PC-3 (cell line): ENCODE measurements at regions of chr1 and their contacts with region 1.

Region 1: DNA sequence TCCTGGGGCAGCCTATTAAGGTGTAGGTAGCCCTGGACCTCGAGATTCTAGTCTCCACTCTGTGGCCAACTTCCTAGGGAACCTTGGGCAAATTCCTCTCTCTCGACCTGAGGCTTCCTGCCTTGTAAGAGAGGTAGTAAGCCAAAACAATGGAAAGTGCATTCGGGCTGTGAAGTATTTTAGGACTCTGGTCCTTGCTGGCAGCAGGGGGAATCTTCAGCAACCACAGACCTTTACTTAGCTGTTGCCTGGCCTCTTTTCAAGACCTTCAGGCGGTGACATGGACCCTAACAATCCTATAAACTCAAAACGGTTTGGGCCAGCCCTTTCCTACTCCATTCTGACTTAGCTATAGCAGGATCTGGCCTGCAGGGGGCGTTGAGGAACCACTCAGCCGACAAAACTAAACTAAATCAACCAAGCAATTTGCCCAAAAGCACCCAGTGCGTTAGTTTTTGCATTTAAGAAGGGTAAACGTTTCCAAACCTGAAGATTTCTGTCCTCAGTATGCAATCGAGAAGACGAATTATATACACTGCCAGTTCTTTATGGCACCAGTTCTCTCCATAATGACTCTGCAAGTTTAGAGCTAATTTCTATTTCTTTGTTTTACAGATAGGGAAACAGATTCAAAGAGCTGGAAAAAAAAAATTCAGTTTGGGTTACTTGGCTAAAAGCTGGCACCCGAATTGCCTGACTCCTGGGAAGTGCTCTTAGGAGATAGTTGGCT is 10.9 kb upstream of the SESN2 start:
- DNase-seq: peak; percentile 80
- ATAC-seq: peak; percentile 45
- H3K4me3 ChIP-seq: peak overlapping the region; percentile 59
- H3K27ac ChIP-seq: peak overlapping the region; percentile 55
- H3K4me1 ChIP-seq: peaks cover 26% of the 10 kb centered on the region
- H3K27me3 ChIP-seq: no peaks in the 10 kb centered on the region
- CTCF ChIP-seq: peak; percentile 95

Region 2: DNA sequence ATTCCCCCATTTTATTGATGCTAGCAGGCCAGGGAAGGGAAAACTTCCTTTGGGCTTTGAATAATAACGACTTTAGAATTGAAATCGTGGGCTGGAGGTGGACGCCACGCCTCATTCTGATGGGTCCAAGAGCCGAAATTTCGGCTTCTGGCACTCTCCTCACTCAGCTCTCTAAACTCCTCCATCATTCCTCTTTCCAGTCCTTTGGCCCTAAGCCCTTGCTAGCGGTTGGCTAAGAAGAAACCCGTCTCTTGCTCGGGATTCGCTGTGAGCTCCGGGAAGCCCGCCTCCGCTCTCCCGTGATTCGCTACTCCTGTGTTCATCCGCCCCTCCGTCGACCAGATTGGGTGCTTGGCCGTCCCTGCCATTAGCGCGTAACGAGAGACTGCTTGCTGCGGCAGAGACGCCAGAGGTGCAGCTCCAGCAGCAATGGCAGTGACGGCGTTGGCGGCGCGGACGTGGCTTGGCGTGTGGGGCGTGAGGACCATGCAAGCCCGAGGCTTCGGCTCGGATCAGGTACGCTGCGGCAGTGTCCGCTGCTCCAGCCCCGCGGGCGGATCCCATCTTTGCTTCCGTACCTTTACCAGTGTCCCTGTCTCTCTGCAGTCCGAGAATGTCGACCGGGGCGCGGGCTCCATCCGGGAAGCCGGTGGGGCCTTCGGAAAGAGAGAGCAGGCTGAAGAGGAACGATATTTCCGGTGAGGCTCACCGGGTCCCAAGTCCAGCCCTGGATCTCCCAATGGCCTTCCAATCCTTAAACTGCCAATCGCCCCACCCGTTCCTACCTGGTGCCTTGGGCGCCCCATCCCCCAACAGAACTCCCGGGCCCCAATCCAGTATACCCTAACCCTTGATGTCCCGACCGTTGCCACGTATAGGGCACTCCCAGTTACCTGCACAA is 12.4 kb before region 1 on chr1 and contains the start of gene ATP5IF1:
- CTCF ChIA-PET with region 1: no interaction called
- POLR2A ChIA-PET with region 1: interaction called, 12 read pairs
- intact Hi-C with region 1: no loop called
- DNase-seq: peak; percentile 98
- ATAC-seq: peak; percentile 92
- H3K4me3 ChIP-seq: peak within 1 kb of the TSS; percentile 92
- H3K27ac ChIP-seq: peak within 1 kb of the TSS; percentile 19
- H3K4me1 ChIP-seq: peaks cover 29% of the 10 kb centered on the region
- H3K27me3 ChIP-seq: no peaks in the 10 kb centered on the region
- CTCF ChIP-seq: no peak
- total RNA-seq, gene ATP5IF1: 364 and 465 TPM in 2 replicates

Region 3: GRCh38 chr1:28296401-28297261 is 48.2 kb after region 1 on chr1:
- CTCF ChIA-PET with region 1: no interaction called
- POLR2A ChIA-PET with region 1: no interaction called
- intact Hi-C with region 1: no loop called
- DNase-seq: no peak
- ATAC-seq: no peak
- H3K4me3 ChIP-seq: no peak overlapping the region
- H3K27ac ChIP-seq: no peak overlapping the region
- H3K4me1 ChIP-seq: no peaks in the 10 kb centered on the region
- H3K27me3 ChIP-seq: no peaks in the 10 kb centered on the region
- CTCF ChIP-seq: no peak

Region 4: GRCh38 chr1:28329395-28330153 is 81.1 kb after region 1 on chr1:
- CTCF ChIA-PET with region 1: no interaction called
- POLR2A ChIA-PET with region 1: no interaction called
- intact Hi-C with region 1: loop called (anchors 5 kb)
- DNase-seq: peak; percentile 17
- ATAC-seq: peak; percentile 37
- H3K4me3 ChIP-seq: peak overlapping the region; percentile 67
- H3K27ac ChIP-seq: peak overlapping the region; percentile 62
- H3K4me1 ChIP-seq: peaks cover 15% of the 10 kb centered on the region; the same call in 1 of the 2 replicates
- H3K27me3 ChIP-seq: no peaks in the 10 kb centered on the region
- CTCF ChIP-seq: no peak

Region 5: DNA sequence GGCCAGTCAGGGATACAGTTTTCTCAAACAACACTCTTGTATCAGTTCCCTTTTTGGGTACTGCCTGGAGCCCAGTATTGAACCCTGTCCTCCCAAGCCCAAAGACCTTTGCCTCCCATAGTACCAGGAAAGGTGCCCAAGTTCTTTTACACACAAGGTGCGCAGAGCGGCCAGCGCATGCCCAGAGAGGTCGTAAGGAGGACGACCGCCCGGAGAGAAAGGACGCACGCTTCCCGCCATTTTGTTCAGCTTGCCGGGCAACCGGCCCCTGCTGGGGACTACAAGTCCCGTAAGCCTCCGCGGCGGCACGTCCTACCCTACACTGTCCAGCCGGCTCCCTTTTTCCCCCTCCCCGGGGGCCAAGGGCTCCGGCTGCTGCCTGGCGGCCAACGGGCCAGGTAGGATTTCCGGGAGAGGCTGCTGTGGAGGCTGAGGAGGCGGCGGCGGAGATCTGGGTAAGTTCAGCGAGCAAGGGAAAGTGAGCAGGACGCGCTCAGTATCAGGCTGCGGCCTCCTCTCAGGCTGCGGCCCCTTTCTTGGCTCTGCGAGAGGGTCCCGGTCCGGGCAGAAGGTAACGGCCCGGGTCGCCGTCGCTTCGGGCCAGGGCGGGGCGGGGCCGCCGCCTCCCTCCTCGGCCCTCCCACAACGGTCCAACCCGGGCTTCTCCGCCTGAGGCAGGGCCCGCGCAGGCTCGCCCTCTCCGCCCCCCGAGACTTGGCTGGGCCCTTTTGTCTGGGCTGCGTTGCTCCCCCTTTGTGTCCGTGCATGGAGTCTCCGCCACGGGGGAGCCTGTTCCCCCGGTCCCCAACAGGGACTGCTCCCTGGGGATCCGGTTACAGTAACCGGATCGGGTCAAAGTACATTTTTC is 121.2 kb after region 1 on chr1 and contains the start of gene PHACTR4:
- CTCF ChIA-PET with region 1: interaction called, 32 read pairs
- POLR2A ChIA-PET with region 1: interaction called, 9 read pairs
- intact Hi-C with region 1: loop called (anchors 1 kb)
- DNase-seq: peak; percentile 93
- ATAC-seq: peak; percentile 94
- H3K4me3 ChIP-seq: peak within 1 kb of the TSS; percentile 87
- H3K27ac ChIP-seq: peak within 1 kb of the TSS; percentile 58
- H3K4me1 ChIP-seq: peaks cover 24% of the 10 kb centered on the region
- H3K27me3 ChIP-seq: no peaks in the 10 kb centered on the region
- CTCF ChIP-seq: no peak
- total RNA-seq, gene PHACTR4: 9.1 and 12.7 TPM in 2 replicates

Region 6: GRCh38 chr1:28510665-28511440 is 262.4 kb after region 1 on chr1:
- CTCF ChIA-PET with region 1: no interaction called
- POLR2A ChIA-PET with region 1: no interaction called
- intact Hi-C with region 1: loop called (anchors 5 kb)
- DNase-seq: peak; percentile 66
- ATAC-seq: peak; percentile 42
- H3K4me3 ChIP-seq: peak overlapping the region; percentile 92; the same call in 1 of the 2 replicates
- H3K27ac ChIP-seq: peak overlapping the region; percentile 75; the same call in 1 of the 2 replicates
- H3K4me1 ChIP-seq: peaks cover 26% of the 10 kb centered on the region
- H3K27me3 ChIP-seq: no peaks in the 10 kb centered on the region
- CTCF ChIP-seq: no peak